ENCODE measurements at regions of chr2 and their contacts with region 1.

Region 1: GRCh38 chr2:233353769-233354499 is at the start of gene DGKD:
- DNase-seq: peak; percentile 69
- H3K4me3 Mint-ChIP-seq: peak within 1 kb of the TSS; percentile 83
- H3K27ac Mint-ChIP-seq: peak within 1 kb of the TSS; percentile 93
- H3K4me1 Mint-ChIP-seq: peaks cover 73% of the 10 kb centered on the region
- H3K27me3 Mint-ChIP-seq: no peaks in the 10 kb centered on the region
- total RNA-seq, gene DGKD: 84.1 to 97.5 TPM

Region 2: DNA sequence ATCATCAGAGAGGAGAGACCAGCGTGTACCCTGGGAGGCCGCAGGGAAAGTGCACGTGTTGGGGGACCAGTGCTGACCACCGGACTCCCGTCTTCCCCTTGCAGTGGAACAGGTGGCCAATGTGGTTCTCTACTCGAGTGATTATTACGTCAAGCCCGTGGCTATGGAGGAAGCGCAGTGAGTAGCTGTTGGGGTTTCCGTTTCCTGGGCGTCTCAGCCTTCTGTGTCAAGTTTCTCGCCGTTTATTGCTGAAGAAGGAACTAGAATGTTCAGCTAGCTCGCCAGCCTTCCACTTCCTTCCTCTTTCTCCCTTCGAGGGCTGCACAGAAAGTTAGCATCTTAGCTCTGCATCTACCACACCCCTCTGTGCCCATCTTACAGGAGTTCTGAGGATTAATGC is 22.4 kb before region 1 on chr2:
- CTCF ChIA-PET with region 1: interaction called, 12 read pairs
- POLR2A ChIA-PET with region 1: interaction called, 3 read pairs
- DNase-seq: peak; percentile 88
- H3K4me3 Mint-ChIP-seq: peak overlapping the region; percentile 55
- H3K27ac Mint-ChIP-seq: peak overlapping the region; percentile 96
- H3K4me1 Mint-ChIP-seq: peaks cover 52% of the 10 kb centered on the region
- H3K27me3 Mint-ChIP-seq: no peaks in the 10 kb centered on the region

Region 3: DNA sequence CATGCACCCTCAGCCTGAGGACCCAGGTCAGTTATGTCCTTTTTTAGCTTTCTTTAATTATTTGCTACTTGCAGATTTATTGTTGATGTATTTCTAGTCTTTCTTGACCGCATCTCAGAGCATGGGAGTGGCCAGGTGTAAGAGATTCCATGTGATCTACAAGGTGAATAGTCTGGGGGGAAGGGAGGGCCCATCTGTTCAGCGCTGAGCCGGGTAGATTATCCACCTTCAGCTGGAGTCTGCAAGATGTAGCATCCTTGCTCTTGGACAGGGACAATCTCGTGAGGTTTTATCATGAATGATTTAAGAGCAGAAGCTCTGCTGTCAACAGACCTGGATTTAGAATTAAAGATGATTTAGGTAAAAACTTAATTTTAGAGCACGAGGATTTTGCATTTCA is 11.6 kb before region 1 on chr2:
- CTCF ChIA-PET with region 1: interaction called, 12 read pairs
- POLR2A ChIA-PET with region 1: no interaction called
- DNase-seq: no peak
- H3K4me3 Mint-ChIP-seq: no peak overlapping the region
- H3K27ac Mint-ChIP-seq: no peak overlapping the region
- H3K4me1 Mint-ChIP-seq: peaks cover 13% of the 10 kb centered on the region
- H3K27me3 Mint-ChIP-seq: peaks cover 2% of the 10 kb centered on the region

Region 4: GRCh38 chr2:233369897-233370685 is 16.2 kb after region 1 on chr2:
- CTCF ChIA-PET with region 1: interaction called, 13 read pairs
- POLR2A ChIA-PET with region 1: no interaction called
- DNase-seq: no peak
- H3K4me3 Mint-ChIP-seq: no peak overlapping the region
- H3K27ac Mint-ChIP-seq: no peak overlapping the region
- H3K4me1 Mint-ChIP-seq: peaks cover 19% of the 10 kb centered on the region
- H3K27me3 Mint-ChIP-seq: no peaks in the 10 kb centered on the region

Region 5: DNA sequence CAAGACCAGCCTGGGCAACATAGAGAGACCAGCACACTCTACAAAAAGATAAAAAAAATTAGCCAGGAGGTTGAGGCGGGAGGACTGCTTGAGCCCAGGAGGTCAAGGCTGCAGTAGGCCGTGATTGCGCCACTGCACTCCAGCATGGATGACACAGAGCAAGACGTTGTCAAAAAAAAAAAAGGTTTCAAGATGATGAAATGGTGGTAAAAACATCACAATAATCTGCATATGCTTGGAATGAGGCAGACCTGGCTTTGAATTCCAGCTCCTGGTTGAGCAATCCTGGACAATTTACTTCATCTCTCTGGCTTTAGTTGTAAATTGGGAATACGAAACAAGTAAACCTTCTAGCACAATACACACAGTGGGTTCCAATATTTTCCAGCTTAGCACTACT is 188.6 kb after region 1 on chr2:
- CTCF ChIA-PET with region 1: no interaction called
- POLR2A ChIA-PET with region 1: no interaction called
- DNase-seq: no peak
- H3K4me3 Mint-ChIP-seq: no peak overlapping the region
- H3K27ac Mint-ChIP-seq: no peak overlapping the region
- H3K4me1 Mint-ChIP-seq: peaks cover 13% of the 10 kb centered on the region
- H3K27me3 Mint-ChIP-seq: no peaks in the 10 kb centered on the region